ENCODE measurements at regions of chr4 and their contacts with region 1.

Region 1: GRCh38 chr4:30281986-30282385 is 438.2 kb upstream of the PCDH7 start:
- DNase-seq: no peak
- ATAC-seq: no peak
- H3K4me3 ChIP-seq: no peak overlapping the region
- H3K27ac ChIP-seq: no peak overlapping the region
- H3K4me1 ChIP-seq: no peaks in the 10 kb centered on the region
- H3K27me3 ChIP-seq: no peaks in the 10 kb centered on the region
- CTCF ChIP-seq: no peak
- EP300 ChIP-seq: no peak
- POLR2A ChIP-seq: no peak
- RAD21 ChIP-seq: no peak

Region 2: DNA sequence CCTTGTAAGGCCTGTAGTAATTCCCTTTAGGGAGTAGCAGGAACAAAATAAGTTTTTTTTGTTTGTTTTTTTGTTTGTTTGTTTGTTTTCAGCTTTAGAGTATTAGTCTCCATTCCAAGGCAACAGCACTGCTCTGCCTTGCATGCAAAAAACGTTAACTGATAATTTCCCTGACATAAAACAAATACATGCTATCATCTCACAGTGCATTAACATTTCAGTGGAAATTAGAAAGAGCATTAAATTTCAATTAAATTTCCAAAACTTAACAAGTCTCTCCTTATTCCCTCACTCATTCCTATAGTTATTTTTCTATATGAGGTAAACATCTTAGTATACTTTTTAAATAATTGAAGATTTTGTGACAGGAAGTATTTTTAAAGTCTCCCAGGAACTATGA is 59.7 kb after region 1 on chr4:
- CTCF ChIA-PET with region 1: no interaction called
- POLR2A ChIA-PET with region 1: no interaction called
- in situ Hi-C with region 1: no loop called
- intact Hi-C with region 1: loop called (anchors 2 kb)
- DNase-seq: no peak
- ATAC-seq: no peak
- H3K4me3 ChIP-seq: no peak overlapping the region
- H3K27ac ChIP-seq: no peak overlapping the region
- H3K4me1 ChIP-seq: no peaks in the 10 kb centered on the region
- H3K27me3 ChIP-seq: no peaks in the 10 kb centered on the region
- CTCF ChIP-seq: no peak
- EP300 ChIP-seq: no peak
- POLR2A ChIP-seq: no peak
- RAD21 ChIP-seq: no peak

Region 3: DNA sequence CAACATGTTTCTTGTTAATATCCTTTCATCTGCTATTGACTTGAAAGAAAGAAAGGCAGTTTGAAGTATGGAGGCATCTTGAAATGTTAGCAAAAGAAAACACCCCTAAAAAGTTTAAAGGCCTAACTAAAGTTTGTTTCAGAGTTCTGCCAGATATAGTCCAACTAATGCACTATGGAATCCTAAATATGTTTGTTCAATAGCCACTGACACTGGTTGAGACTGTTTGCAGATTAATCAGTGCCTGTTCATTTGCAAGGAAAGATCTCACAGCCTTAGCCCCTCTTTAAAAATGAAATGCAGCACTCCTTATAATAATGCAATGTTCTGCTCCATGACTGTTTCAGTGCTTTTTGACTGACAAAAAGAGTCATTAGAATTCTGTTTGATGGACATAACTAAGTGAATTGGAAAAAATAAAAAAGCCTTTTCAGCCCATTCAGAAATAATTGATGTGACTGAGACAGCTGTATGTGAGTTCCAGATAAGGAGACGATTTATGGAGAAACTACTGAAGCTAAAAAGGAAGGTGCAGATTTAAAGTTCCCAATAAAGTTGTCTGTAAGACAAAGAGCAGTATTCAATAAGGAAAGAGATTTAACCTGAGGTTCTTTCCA is 630.2 kb after region 1 on chr4:
- CTCF ChIA-PET with region 1: no interaction called
- POLR2A ChIA-PET with region 1: no interaction called
- in situ Hi-C with region 1: no loop called
- intact Hi-C with region 1: no loop called
- DNase-seq: no peak
- ATAC-seq: no peak
- H3K4me3 ChIP-seq: no peak overlapping the region
- H3K27ac ChIP-seq: no peak overlapping the region
- H3K4me1 ChIP-seq: no peaks in the 10 kb centered on the region
- H3K27me3 ChIP-seq: no peaks in the 10 kb centered on the region
- CTCF ChIP-seq: no peak
- EP300 ChIP-seq: no peak
- POLR2A ChIP-seq: no peak
- RAD21 ChIP-seq: no peak

Measured in K562 (cell line).